ENCODE measurements at regions of chr1 and their contacts with region 1.

Region 1: DNA sequence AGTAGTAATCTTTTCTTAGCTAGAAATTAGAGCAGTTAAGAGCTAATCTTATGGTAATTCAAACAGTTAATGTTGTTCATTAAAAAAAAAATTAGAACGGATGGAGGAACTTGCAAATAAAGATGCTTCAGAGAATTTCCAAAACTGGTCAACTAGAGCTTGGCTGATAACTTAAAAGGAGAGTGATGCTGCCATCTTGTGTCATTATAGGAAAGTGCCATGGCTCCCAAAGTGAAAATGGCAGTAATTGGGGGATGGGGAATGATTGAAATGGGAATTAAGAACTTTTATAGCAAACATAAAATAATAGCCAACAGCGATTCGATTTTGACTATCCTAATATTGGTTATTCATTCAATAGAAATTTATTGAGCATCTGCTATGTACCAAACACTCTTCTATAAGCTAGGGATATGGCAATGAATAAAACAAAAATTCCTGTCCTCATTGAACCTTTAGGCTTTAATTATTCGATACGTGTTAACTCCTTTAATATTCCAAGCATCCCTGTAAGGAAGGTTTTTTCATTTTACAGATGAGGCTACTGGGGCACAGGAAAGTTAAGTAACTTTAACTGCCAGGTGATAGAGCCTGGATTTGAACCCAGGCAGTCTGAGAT is 5.7 kb upstream of the PLPP3 start:
- DNase-seq: no peak
- H3K4me3 ChIP-seq: no peak overlapping the region
- H3K27ac ChIP-seq: no peak overlapping the region
- H3K4me1 ChIP-seq: peaks cover 7% of the 10 kb centered on the region
- H3K27me3 ChIP-seq: no peaks in the 10 kb centered on the region
- CTCF ChIP-seq: peak; percentile 93

Region 2: GRCh38 chr1:55284852-55285251 is 1300.2 kb before region 1 on chr1:
- intact Hi-C with region 1: loop called (anchors 2 kb)
- DNase-seq: no peak
- H3K4me3 ChIP-seq: no peak overlapping the region
- H3K27ac ChIP-seq: no peak overlapping the region
- H3K4me1 ChIP-seq: no peaks in the 10 kb centered on the region
- H3K27me3 ChIP-seq: no peaks in the 10 kb centered on the region
- CTCF ChIP-seq: peak; percentile 80

Region 3: DNA sequence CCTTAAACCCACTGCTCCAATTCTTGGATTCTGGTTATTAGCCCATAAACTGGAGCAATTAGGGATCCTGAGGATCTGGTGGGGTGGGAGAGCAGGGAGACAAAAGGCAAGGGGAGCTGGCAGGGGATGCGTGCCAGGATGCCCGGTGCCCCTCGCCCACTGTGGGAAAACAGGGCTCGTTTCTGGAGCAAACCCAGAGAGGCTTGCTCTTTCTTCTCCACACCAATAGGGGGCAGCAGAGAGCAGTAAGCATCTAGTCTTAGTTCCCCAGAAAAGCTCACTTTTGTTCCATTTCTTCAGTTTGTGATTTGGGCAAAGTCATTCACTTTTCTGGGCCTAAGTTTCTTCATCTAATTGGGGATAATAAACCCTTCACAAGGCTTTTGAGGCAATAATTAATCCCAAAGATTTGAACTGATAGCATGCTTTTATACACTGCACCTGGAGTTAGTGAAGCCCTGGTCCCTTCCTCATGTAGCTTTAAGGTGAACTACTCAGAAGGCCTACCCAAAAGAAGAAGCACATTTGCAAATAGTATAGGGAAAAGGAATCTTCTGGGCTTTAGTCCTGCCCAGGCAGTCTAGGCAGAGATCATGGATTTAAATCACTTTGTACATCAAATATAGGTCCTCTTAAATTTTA is 1209.3 kb before region 1 on chr1:
- intact Hi-C with region 1: loop called (anchors 10 kb)
- DNase-seq: no peak
- H3K4me3 ChIP-seq: no peak overlapping the region
- H3K27ac ChIP-seq: peak overlapping the region; percentile 21
- H3K4me1 ChIP-seq: peaks cover 8% of the 10 kb centered on the region
- H3K27me3 ChIP-seq: no peaks in the 10 kb centered on the region
- CTCF ChIP-seq: peak; percentile 96

Region 4: GRCh38 chr1:56527548-56528302 is 57.3 kb before region 1 on chr1:
- intact Hi-C with region 1: no loop called
- DNase-seq: no peak
- H3K4me3 ChIP-seq: no peak overlapping the region
- H3K27ac ChIP-seq: peak overlapping the region; percentile 82
- H3K4me1 ChIP-seq: peaks cover 100% of the 10 kb centered on the region
- H3K27me3 ChIP-seq: no peaks in the 10 kb centered on the region
- CTCF ChIP-seq: no peak